SK-N-SH (cell line): ENCODE measurements at regions of chr11 and their contacts with region 1.

Region 1: GRCh38 chr11:75802913-75803820 is 11.8 kb upstream of the UVRAG start:
- DNase-seq: peak; percentile 79
- H3K4me3 ChIP-seq: no peak overlapping the region
- H3K27ac ChIP-seq: no peak overlapping the region
- H3K4me1 ChIP-seq: no peaks in the 10 kb centered on the region; a peak in 1 of 4 replicates
- H3K27me3 ChIP-seq: no peaks in the 10 kb centered on the region
- CTCF ChIP-seq: peak; percentile 86
- EP300 ChIP-seq: no peak
- RAD21 ChIP-seq: peak; percentile 91

Region 2: GRCh38 chr11:75773595-75774353 is 29.4 kb before region 1 on chr11:
- CTCF ChIA-PET with region 1: interaction called, 18 read pairs
- POLR2A ChIA-PET with region 1: no interaction called
- DNase-seq: no peak
- H3K4me3 ChIP-seq: no peak overlapping the region
- H3K27ac ChIP-seq: no peak overlapping the region
- H3K4me1 ChIP-seq: peaks cover 0 to 10% of the 10 kb centered on the region in 2 experiments; a peak in 1 of 4 replicates
- H3K27me3 ChIP-seq: peaks cover 7% of the 10 kb centered on the region
- CTCF ChIP-seq: no peak
- EP300 ChIP-seq: no peak
- RAD21 ChIP-seq: no peak

Region 3: DNA sequence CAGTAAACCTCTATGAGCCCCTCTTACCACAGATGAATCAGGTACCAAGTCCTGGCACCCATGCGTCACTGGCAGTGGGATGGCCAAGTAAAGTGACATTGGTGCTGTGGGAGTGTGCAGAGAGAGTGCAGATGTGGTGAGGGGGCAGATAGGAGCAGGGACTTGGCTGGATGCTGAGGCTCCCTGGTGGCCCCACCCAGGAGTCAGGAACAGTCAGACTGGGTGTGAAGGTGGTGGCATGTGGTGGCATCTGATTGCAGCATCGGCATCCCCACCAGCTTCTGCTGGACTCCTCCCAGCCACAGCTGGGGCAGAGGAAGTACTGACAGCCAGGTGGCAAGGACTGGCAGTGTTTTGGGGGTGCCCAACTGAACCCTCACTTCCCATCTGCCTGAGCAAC is 23.2 kb before region 1 on chr11:
- CTCF ChIA-PET with region 1: interaction called, 18 read pairs
- POLR2A ChIA-PET with region 1: no interaction called
- DNase-seq: no peak
- H3K4me3 ChIP-seq: no peak overlapping the region
- H3K27ac ChIP-seq: no peak overlapping the region
- H3K4me1 ChIP-seq: peaks cover 0 to 12% of the 10 kb centered on the region in 2 experiments; a peak in 1 of 4 replicates
- H3K27me3 ChIP-seq: no peaks in the 10 kb centered on the region
- CTCF ChIP-seq: no peak
- EP300 ChIP-seq: no peak
- RAD21 ChIP-seq: no peak

Region 4: DNA sequence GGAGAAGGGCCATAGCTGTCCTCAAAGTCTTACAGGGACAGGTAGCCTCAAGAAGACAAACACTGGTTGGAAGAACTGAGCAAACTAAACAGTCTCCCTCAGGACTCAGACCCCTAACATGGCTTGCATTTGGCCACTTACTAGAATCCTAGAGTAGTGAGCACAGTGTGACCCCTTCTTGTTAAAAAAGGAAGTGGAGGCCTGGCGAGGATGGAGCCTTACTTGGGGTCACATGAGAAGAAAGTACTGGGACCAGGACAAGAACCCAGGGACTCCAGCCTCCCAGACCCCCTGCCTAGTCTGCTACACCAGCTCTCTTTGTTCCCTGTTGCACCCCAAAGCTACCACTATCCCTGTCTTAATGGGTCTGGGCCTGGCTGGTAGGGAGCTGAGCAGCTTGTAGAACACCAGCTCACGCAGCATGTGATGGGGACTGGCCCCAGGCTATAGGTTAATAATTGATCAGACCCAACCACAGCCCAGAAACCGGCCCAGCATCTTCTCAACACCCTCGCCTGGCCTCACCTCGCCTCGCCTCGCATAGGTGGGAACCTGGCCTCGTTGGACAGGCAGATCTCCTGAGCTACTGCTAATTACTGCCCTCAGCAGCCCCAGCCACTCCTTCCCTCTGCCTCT is 16.9 kb before region 1 on chr11:
- CTCF ChIA-PET with region 1: interaction called, 36 read pairs
- POLR2A ChIA-PET with region 1: no interaction called
- DNase-seq: no peak
- H3K4me3 ChIP-seq: no peak overlapping the region
- H3K27ac ChIP-seq: no peak overlapping the region
- H3K4me1 ChIP-seq: peaks cover 0 to 6% of the 10 kb centered on the region in 2 experiments; a peak in 1 of 4 replicates
- H3K27me3 ChIP-seq: no peaks in the 10 kb centered on the region
- CTCF ChIP-seq: no peak
- EP300 ChIP-seq: no peak
- RAD21 ChIP-seq: no peak

Region 5: DNA sequence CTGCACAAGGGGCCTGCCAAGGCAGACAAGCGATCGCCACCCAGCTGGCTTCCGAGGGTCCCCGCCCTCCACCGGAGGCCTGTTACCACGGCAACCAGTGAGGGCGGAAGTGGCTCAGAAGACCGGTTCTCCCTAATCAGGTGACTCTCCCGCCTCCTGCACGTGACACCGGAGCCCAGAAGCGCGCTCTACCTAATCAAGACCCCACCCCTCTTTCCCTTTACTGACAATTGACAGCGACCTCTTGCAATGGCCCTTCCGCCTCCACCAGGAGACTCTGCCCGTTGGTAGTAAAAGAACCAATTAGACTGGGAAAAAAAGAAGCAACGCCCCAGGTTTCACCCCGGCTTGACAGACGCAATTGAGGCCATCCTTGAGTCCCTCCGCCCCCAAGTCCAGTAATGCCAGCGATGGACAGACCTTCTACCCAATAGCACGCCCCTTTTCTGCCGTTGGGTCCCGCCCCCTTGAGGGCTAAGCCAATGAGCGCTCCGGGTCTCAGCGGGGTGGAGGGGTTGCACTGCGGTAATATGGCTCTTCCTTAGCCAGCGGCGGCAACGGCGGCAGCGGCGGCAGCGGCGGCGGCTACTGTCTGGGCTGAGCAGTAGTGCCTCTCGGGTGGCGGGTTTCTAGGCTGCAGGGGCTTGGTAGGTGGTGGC is 11.6 kb after region 1 on chr11 and contains the start of gene UVRAG:
- CTCF ChIA-PET with region 1: interaction called, 44 read pairs
- POLR2A ChIA-PET with region 1: interaction called, 8 read pairs
- DNase-seq: peak; percentile 97
- H3K4me3 ChIP-seq: peak within 1 kb of the TSS; percentile 87 to 95
- H3K27ac ChIP-seq: peak within 1 kb of the TSS; percentile 70 to 88
- H3K4me1 ChIP-seq: peaks cover 9 to 13% of the 10 kb centered on the region in 2 experiments; a peak in 2 of 4 replicates
- H3K27me3 ChIP-seq: no peaks in the 10 kb centered on the region
- CTCF ChIP-seq: no peak
- EP300 ChIP-seq: no peak
- RAD21 ChIP-seq: no peak
- polyA plus RNA-seq, gene UVRAG: 5.8 and 7.7 TPM in 2 replicates

Region 6: GRCh38 chr11:75873417-75874221 is 70.5 kb after region 1 on chr11:
- CTCF ChIA-PET with region 1: interaction called, 115 read pairs
- POLR2A ChIA-PET with region 1: no interaction called
- DNase-seq: no peak
- H3K4me3 ChIP-seq: no peak overlapping the region
- H3K27ac ChIP-seq: no peak overlapping the region
- H3K4me1 ChIP-seq: peaks cover 0 to 6% of the 10 kb centered on the region in 2 experiments; a peak in 2 of 4 replicates
- H3K27me3 ChIP-seq: no peaks in the 10 kb centered on the region
- CTCF ChIP-seq: no peak
- EP300 ChIP-seq: no peak
- RAD21 ChIP-seq: no peak

Region 7: DNA sequence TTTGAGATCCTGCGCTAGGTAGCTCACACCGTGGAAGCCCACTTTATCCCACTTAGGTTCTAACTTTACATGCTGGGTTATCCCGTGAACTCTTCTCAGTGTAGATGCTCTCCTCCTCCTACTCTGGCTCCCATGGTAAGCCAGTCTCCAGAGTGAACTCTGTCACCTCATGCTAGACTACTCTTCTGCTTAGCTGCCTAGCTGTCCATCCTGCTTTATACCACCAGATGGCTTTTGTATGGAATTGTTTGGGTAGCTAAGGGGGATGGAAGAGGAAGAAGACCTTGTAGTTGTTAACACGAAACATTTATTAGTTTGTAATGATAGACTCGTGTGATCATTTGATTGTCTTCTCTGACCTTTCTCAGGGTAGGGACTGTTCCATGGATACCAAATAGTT is 688.5 kb after region 1 on chr11:
- CTCF ChIA-PET with region 1: no interaction called
- POLR2A ChIA-PET with region 1: no interaction called
- DNase-seq: no peak
- H3K4me3 ChIP-seq: no peak overlapping the region
- H3K27ac ChIP-seq: no peak overlapping the region
- H3K4me1 ChIP-seq: no peaks in the 10 kb centered on the region
- H3K27me3 ChIP-seq: no peaks in the 10 kb centered on the region
- CTCF ChIP-seq: no peak
- EP300 ChIP-seq: no peak
- RAD21 ChIP-seq: no peak